GM13977 (cell line): ENCODE measurements at regions of chr1 and their contacts with region 1.

Region 1: DNA sequence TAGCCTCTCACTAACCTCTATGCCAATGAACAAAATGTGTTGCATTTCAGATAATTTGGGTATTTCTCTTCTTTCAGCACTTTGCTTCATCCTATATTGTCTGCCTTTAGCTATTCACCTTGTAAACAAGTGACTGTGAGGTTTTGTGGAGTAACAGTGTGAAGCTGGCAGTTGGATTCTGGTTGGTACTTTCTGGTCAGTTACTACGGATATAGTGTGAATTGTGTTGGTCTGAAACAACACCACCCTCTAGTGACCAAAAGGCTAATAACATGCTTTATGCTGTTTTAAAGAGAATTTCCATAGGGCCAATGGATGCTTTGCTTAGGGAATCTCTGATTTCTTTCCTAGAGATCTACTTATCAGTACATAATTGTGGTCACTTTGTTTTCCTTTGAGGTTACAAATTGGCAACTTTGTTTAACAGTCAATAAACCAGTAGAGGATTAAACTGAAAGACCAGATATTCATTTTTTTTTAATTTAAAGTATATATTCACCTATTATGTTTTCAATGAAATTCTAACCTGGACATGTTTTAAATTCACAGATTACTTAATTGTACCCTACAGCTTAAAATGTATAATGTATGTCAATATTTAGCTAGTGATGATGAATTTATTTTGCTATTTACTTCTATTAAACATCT is 2.5 kb upstream of the PTGER3 start:
- DNase-seq: peak; percentile 81
- CTCF ChIP-seq: peak; percentile 73

Region 2: GRCh38 chr1:70685300-70686241 is 364.5 kb before region 1 on chr1:
- in situ Hi-C with region 1: loop called (anchors 10 kb)
- DNase-seq: peak; percentile 59
- CTCF ChIP-seq: peak; percentile 89